CD4-positive, alpha-beta memory T cell (primary cell): ENCODE measurements at regions of chr2 and their contacts with region 1.

Region 1: GRCh38 chr2:189751080-189751658 is 11.4 kb downstream of the OSGEPL1 start:
- DNase-seq: peak; percentile 36 to 49 (median 43)
- H3K4me3 ChIP-seq: no peak overlapping the region
- H3K4me3 Mint-ChIP-seq: no peak overlapping the region
- H3K27ac ChIP-seq: no peak overlapping the region
- H3K27ac Mint-ChIP-seq: peak overlapping the region in 3 of 7 donors; percentile 19 to 89 (median 59)
- H3K4me1 ChIP-seq: no peaks in the 10 kb centered on the region
- H3K4me1 Mint-ChIP-seq: peaks cover 0 to 1% (median 0%) of the 10 kb centered on the region in 4 donors
- H3K27me3 ChIP-seq: no peaks in the 10 kb centered on the region
- H3K27me3 Mint-ChIP-seq: no peaks in the 10 kb centered on the region

Region 2: DNA sequence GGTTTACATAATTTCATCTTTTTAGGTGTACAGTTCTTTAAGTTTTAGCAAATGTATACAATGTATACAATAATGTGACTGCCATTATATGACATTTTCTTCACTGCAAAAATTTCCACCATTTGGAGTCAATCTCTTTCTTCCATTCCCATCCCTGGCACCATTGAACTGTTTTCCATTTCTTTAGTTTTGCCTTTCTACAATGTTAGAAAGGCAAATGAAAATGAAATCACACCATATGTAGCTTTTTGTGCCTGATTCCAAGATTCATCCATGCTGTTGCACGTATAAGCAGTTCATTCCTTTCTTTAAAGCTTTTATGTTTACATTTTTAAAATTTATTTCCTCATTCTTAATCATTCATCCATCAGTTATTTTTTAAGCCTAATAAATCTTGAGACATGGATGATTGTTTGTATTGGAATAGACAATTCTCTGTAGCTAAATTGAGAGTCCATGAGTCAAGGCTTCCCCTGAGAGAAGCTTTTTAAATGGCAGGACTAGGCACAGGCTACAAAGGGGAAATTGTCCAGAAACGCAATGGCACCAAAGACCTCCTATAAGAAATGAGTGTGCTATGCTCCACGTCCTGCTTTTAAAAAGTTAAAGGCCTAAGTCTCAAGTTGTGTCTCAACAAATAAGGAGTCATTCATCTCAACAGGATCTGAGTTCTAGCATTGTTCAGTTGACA is 562.9 kb before region 1 on chr2:
- CTCF ChIA-PET with region 1: no interaction called
- POLR2A ChIA-PET with region 1: no interaction called
- intact Hi-C with region 1: no loop called
- DNase-seq: no peak
- H3K4me3 ChIP-seq: no peak overlapping the region
- H3K4me3 Mint-ChIP-seq: no peak overlapping the region
- H3K27ac ChIP-seq: no peak overlapping the region
- H3K27ac Mint-ChIP-seq: no peak overlapping the region
- H3K4me1 ChIP-seq: no peaks in the 10 kb centered on the region
- H3K4me1 Mint-ChIP-seq: peaks cover 0 to 1% (median 0%) of the 10 kb centered on the region in 4 donors
- H3K27me3 ChIP-seq: no peaks in the 10 kb centered on the region
- H3K27me3 Mint-ChIP-seq: peaks cover 3% of the 10 kb centered on the region in 2 donors

Region 3: DNA sequence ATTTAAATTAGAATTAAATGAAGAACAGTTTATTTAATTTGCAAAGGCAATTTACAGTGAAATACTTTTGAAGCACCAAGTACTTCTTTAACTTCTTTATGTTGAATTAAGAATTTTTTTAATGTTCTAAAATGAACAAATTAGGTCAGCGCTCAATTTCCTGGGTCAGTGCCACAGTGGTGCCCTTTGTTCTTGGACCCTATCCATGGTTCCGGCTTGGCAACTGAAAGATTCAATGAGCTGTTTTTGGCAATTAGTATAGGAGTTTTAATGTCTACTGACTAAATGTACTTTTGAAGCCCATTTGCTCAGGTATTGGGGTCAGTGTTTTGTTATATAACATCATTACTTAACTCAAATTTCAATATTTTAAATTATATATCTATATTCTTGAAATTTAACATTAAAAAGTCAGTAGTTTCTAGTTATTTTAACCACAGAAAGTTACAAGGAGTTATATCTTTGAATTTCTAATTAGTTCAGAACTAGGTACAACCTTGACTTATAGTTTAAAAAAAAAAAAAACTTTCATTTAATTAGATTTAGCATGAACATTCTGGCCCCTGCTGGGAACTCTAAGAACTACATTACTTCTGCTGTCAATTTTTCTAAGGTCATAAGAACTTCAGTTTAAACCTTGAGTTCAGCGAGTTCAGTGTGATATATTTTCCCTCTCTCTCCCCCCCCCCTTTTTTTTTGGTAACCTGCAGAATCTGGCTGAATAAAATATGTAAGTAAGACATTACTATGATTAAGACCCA is 318.9 kb after region 1 on chr2:
- CTCF ChIA-PET with region 1: interaction called, 13 read pairs
- POLR2A ChIA-PET with region 1: no interaction called
- intact Hi-C with region 1: no loop called
- DNase-seq: peak in 4 of 5 donors; percentile 28 to 35 (median 32)
- H3K4me3 ChIP-seq: no peak overlapping the region
- H3K4me3 Mint-ChIP-seq: no peak overlapping the region
- H3K27ac ChIP-seq: no peak overlapping the region
- H3K27ac Mint-ChIP-seq: no peak overlapping the region
- H3K4me1 ChIP-seq: no peaks in the 10 kb centered on the region
- H3K4me1 Mint-ChIP-seq: no peaks in the 10 kb centered on the region
- H3K27me3 ChIP-seq: no peaks in the 10 kb centered on the region
- H3K27me3 Mint-ChIP-seq: peaks cover 0 to 6% of the 10 kb centered on the region in 2 donors